PC-9 (cell line): ENCODE measurements at regions of chr13 and their contacts with region 1.

Region 1: DNA sequence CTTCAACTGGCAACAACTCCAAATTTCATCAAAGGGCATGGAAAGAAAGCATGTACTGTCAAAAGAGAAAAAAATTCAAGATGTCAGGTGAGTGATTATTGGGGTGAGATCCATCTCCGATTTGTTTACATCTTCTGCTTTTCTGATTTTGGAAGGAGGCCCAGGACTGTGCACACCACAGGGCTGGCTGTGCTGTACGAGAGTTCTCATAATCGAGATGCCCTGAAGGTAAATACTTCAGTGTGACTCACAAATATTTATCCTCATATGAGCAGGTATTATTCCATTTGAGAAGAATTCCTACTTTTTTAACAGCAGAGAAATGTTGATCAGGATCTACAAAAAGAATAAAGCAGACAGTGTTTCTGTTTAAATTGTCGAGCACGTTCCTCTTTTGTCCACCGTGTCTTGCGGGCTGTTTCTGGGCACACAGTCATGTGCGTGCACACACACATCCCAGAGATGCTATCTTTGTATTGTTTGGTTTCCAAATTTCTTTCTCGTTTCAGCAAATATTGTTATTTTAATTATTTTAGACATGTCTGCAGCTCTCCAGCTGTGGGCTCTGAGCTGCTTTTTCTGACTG is 103.7 kb downstream of the KL start:
- DNase-seq: peak; percentile 62 to 97
- H3K4me3 ChIP-seq: peak overlapping the region; percentile 32; the same call in 1 of the 2 replicates
- H3K27ac ChIP-seq: peak overlapping the region; percentile 98
- H3K4me1 ChIP-seq: peaks cover 65% of the 10 kb centered on the region
- H3K27me3 ChIP-seq: no peaks in the 10 kb centered on the region
- CTCF ChIP-seq: no peak

Region 2: GRCh38 chr13:32315238-32316027 is 804.5 kb before region 1 on chr13 and contains the starts of genes BRCA2 and ZAR1L:
- CTCF ChIA-PET with region 1: no interaction called
- POLR2A ChIA-PET with region 1: no interaction called
- intact Hi-C with region 1: no loop called
- DNase-seq: peak; percentile 74 to 80
- H3K4me3 ChIP-seq: peak within 1 kb of the TSS; percentile 95
- H3K27ac ChIP-seq: peak within 1 kb of the TSS; percentile 95
- H3K4me1 ChIP-seq: peaks cover 16% of the 10 kb centered on the region
- H3K27me3 ChIP-seq: no peaks in the 10 kb centered on the region
- CTCF ChIP-seq: no peak
- total RNA-seq, gene BRCA2: 11.4 and 14.5 TPM in 2 replicates
- total RNA-seq, gene ZAR1L: 0.37 and 0.43 TPM in 2 replicates

Region 3: GRCh38 chr13:32824671-32825070 is 295.3 kb before region 1 on chr13:
- CTCF ChIA-PET with region 1: no interaction called
- POLR2A ChIA-PET with region 1: no interaction called
- intact Hi-C with region 1: loop called (anchors 1 kb)
- DNase-seq: peak; percentile 73 to 96
- H3K4me3 ChIP-seq: peak overlapping the region; percentile 33; the same call in 1 of the 2 replicates
- H3K27ac ChIP-seq: peak overlapping the region; percentile 91
- H3K4me1 ChIP-seq: peaks cover 41% of the 10 kb centered on the region
- H3K27me3 ChIP-seq: no peaks in the 10 kb centered on the region
- CTCF ChIP-seq: no peak

Region 4: DNA sequence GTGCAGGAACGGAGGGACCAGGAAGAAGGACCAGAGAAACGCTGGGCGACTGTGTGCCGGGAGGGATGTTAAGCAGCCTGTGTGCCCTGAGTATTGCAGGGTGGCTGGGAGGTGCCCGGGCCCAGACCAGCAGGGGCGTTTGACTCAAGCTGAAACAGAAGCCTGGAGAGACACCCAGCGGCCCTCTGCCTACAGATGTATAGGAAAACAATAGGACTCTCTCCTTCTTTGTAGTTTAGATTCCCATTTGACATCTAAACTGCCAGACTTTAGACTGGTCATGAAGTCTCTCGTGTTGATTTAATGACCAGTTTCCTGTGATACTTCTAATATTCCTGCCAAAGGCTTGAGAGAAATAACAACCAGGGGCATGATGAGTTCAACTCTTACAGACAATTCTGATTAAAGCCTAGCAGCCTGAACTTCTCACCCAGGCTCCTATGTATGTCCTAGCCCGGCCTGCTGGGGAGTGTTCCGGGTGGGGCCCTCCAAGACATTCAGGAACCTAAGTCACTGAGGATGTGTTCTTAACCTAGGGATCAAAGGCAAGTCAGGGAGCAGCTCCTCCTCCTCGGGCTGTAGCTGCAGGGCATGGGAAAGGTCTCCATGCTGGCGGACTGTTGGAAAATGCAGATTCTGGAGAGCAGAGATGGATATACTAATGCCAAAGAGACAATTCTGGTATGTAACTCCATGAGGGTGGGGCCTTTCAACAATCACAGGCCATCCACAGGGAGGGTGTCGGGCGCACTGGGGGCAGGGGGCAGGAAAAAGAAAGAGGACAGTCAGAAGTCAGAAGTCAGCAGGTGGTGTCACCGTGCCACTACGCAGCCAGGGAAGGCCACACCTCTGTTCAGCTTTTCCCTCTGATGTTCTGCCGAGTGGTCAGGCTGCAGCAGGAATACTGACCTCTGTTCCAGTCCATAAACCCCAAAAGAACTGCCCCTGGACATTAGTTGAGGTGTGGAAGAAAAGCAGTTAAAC is 33.7 kb after region 1 on chr13:
- CTCF ChIA-PET with region 1: no interaction called
- POLR2A ChIA-PET with region 1: no interaction called
- intact Hi-C with region 1: loop called (anchors 1 kb)
- DNase-seq: peak; percentile 35 to 48
- H3K4me3 ChIP-seq: no peak overlapping the region
- H3K27ac ChIP-seq: peak overlapping the region; percentile 83
- H3K4me1 ChIP-seq: peaks cover 41% of the 10 kb centered on the region
- H3K27me3 ChIP-seq: no peaks in the 10 kb centered on the region
- CTCF ChIP-seq: no peak